ENCODE measurements at regions of chr2 and their contacts with region 1.

Region 1: DNA sequence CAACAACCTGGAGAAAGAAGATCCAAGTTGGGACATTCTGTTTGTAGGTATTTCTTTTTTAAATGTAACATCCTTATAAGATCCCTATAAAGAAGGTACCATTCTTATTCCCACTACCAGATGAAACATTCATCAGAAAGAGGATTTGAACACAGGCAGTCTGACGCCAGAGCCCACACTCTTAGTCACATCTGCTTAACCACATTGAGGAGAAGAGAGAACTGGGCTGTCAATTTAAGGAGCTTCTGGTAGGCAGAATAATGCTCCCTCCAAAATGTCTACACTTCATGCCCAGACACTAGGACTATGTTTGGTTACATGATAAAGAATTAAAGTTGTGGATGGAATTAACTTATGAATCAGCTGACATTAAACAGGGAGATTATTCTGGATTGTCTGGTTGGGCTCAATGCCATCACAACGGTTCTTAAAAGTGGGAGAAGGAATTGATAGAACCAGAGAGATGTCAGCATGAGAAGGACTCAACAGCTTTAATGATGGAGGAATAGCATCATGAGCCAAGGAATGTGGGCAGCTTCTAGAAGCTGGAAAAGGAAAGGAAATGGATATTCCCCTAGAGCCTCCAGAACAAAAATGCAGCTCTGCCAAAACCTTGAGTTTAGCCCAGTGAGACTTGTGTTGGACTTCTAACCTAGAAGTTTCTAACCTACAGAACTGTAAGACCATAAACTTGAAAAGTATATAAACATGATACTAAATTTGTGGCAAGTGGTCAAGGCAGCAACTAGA is 82.2 kb downstream of the KLF7 start:
- DNase-seq: no peak
- ATAC-seq: peak in 1 of 8 donors; percentile 16
- H3K4me3 ChIP-seq: no peak overlapping the region
- H3K27ac ChIP-seq: peak overlapping the region in 8 of 10 donors; percentile 10 to 86 (median 46)
- H3K4me1 ChIP-seq: peaks cover 6 to 64% (median 47%) of the 10 kb centered on the region in 9 donors
- H3K27me3 ChIP-seq: no peaks in the 10 kb centered on the region
- CTCF ChIP-seq: no peak

Region 2: DNA sequence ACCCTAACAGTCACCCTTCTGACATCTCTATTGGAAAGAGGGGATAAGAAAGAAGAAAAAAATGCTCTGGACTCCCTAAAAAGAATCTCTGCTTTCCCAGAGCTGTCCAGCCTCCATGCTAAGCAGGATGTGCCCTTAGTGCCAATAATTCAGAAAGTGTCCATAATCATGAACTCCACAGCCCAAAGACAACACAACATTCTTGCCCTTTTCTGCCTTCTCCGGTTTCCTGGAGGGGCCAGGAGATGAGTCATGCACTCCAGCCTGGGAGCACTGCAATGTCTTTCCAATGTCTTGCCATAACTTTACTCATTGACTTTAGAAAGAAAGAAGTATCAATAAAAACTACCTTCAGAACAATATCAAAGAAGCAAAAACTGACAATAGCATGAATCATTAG is 38.2 kb after region 1 on chr2:
- intact Hi-C with region 1: loop called in 1 of 10 experiments (anchors 5 kb)
- DNase-seq: no peak
- ATAC-seq: peak in 7 of 8 donors; percentile 30 to 80 (median 51)
- H3K4me3 ChIP-seq: no peak overlapping the region
- H3K27ac ChIP-seq: peak overlapping the region in 9 of 10 donors; percentile 8 to 71 (median 46)
- H3K4me1 ChIP-seq: peaks cover 4 to 78% (median 52%) of the 10 kb centered on the region in 9 donors
- H3K27me3 ChIP-seq: no peaks in the 10 kb centered on the region
- CTCF ChIP-seq: no peak

Region 3: GRCh38 chr2:207143215-207144172 is 60.0 kb after region 1 on chr2:
- intact Hi-C with region 1: loop called in 1 of 10 experiments (anchors 10 kb)
- DNase-seq: peak; percentile 72 to 80
- ATAC-seq: peak; percentile 77 to 91 (median 87)
- H3K4me3 ChIP-seq: peak overlapping the region in 8 of 10 donors; percentile 6 to 44 (median 28)
- H3K27ac ChIP-seq: peak overlapping the region; percentile 69 to 94 (median 88)
- H3K4me1 ChIP-seq: peaks cover 29 to 100% (median 97%) of the 10 kb centered on the region in 9 donors
- H3K27me3 ChIP-seq: no peaks in the 10 kb centered on the region
- CTCF ChIP-seq: no peak

Region 4: GRCh38 chr2:207156451-207157161 is 73.1 kb after region 1 on chr2:
- intact Hi-C with region 1: loop called in 2 of 10 experiments (anchors 5 kb)
- DNase-seq: no peak
- ATAC-seq: no peak
- H3K4me3 ChIP-seq: no peak overlapping the region
- H3K27ac ChIP-seq: peak overlapping the region in 6 of 10 donors; percentile 15 to 100 (median 54)
- H3K4me1 ChIP-seq: peaks cover 26 to 100% (median 99%) of the 10 kb centered on the region in 9 donors
- H3K27me3 ChIP-seq: no peaks in the 10 kb centered on the region
- CTCF ChIP-seq: no peak